HEK293 (cell line): ENCODE measurements at regions of chr2 and their contacts with region 1.

Region 1: DNA sequence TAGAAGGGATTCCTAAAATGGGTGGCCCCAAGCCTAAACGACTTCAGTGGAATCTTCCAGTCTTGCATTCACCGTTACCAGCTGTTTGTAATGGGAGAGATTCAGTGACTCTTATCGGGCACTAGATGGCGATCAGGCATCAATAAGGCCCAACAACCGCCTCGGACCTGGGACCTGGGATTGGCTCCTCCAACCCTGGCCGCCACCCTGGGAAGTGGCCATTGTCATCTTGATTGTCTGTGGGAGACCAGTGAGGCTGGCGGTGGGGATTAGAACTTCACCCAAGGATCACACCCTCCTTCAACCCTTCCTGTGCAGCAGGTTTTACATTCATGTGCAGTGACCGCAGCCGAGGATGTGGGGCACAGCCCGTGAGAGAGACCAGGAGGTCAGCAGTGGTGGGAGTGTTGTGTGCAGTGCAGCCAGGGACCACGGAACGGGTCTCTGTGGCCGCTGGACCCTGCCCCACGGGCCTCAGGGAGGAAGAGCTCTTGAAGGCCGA is 85.3 kb downstream of the SPP2 start:
- H3K4me3 ChIP-seq: no peak overlapping the region
- H3K27ac ChIP-seq: no peak overlapping the region
- H3K4me1 ChIP-seq: no peaks in the 10 kb centered on the region
- CTCF ChIP-seq: peak; percentile 70

Region 2: DNA sequence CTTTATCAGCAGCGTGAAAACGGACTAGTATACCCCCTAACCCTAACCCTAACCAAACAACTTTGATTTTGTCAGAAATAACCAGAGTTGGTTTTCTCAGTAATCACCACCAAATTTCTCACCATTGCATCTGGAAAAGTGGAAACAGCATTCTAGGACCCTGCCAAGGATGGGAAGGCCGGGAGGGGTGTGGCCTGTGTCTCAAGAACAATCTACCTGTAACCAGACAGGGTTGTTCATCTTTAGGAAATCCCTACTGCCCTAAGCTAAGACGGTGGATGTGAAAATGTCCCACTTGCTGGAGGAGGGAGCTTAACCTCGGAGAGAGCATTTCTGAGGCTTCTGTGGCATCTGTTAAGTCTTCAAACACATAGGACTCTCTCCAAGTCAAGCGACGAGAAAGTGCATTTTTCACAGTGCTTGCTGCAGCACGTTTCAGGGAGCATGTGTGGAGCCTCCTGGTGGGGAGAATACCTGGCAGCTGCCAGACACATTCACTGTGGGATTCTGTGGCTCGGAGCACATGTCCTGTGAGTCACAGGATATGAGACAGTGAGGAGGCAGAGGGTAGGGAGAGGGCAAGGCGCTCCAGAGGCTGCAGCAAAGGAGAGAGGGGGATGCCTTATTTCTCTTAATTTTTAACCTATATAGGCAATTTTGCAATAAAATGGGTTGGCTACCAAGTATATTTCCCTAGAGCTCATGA is 122.2 kb after region 1 on chr2:
- CTCF ChIA-PET with region 1: interaction called, 10 read pairs
- POLR2A ChIA-PET with region 1: no interaction called
- H3K4me3 ChIP-seq: no peak overlapping the region
- H3K27ac ChIP-seq: no peak overlapping the region
- H3K4me1 ChIP-seq: no peaks in the 10 kb centered on the region
- CTCF ChIP-seq: peak; percentile 64; the same call in 1 of the 2 replicates

Region 3: DNA sequence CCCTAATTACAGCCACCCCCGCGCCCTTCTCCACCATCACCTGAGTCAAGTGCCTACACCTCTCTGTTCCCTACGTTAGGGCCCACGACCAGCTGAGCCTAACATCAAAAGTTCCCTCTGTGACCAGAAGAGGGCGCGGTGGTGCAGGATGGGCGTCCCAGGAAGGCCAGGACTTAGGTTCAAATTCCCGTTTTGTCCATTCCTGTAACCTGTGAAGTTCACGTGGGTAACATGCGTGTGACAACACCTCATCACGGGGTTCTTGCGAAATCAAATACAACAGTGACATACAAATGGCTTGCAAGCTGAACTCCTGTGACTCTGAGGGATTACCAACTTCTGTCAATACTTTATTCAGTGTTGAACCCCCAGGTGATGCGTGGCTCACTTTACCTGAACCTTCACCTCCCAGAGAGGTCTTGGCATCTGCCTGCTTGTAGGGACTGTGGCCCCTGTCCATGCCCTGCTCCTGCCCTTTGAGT is 153.2 kb after region 1 on chr2:
- CTCF ChIA-PET with region 1: interaction called, 13 read pairs
- POLR2A ChIA-PET with region 1: no interaction called
- H3K4me3 ChIP-seq: no peak overlapping the region
- H3K27ac ChIP-seq: no peak overlapping the region
- H3K4me1 ChIP-seq: no peaks in the 10 kb centered on the region
- CTCF ChIP-seq: peak; percentile 69

Region 4: DNA sequence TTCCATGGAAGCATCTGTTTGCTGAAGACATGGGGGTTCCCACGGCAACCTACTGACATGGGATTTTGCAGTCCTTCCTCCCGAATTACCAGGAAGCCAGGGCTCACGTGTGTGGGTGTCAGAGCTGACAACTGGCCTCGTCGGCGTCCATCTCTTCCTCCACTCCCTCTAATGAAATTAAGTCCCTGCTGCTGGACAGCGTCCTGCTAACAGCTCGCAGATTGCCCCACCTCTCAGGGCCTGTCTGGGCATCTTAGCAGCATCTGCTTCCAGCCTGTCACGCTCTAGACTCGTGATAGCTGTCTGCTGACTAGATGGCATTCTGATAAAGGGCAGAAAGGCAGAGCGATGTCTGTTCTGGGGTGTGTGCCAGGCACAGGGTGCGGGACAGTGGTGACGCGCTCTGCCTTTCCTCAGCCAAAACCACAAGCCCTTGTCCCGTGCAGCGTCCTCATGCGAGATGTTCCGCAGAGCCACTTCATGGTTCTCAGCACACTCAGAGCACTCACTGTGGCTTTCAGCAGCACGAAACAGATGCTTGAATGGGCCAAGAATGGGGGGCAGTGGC is 200.0 kb after region 1 on chr2:
- CTCF ChIA-PET with region 1: no interaction called
- POLR2A ChIA-PET with region 1: no interaction called
- H3K4me3 ChIP-seq: no peak overlapping the region
- H3K27ac ChIP-seq: no peak overlapping the region
- H3K4me1 ChIP-seq: no peaks in the 10 kb centered on the region
- CTCF ChIP-seq: no peak

Region 5: DNA sequence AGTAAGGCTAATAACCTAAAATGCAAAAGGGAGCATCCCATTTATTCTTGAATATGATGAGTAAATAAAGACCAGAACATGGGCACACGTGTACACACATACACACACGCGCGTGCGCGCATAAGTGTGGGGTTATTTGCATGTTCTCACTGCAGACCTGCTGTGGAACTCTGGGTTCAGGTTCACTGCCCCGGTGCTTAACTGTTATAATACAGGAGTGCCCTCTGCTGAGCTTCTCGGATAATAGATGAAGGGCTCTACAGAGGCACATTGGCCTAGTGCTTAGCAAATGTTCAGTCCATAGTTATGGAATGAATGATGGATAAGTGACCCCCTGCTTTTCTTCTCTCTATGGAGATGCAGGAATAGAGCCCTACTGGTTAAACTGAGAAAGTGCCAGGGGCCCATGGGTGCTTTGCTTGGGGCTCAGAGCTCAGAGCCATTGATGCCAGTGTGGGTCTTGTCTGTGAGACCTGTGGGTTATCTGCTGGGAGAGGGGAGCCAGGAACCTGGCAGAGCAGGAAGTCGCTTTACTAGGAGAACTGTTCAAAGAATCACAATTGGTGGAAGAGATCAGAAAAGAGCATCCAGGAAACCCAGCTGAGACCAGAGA is 364.7 kb after region 1 on chr2:
- CTCF ChIA-PET with region 1: interaction called, 10 read pairs
- POLR2A ChIA-PET with region 1: no interaction called
- H3K4me3 ChIP-seq: no peak overlapping the region
- H3K27ac ChIP-seq: no peak overlapping the region
- H3K4me1 ChIP-seq: peaks cover 12% of the 10 kb centered on the region
- CTCF ChIP-seq: no peak